ENCODE measurements at regions of chr6 and their contacts with region 1.

Region 1: DNA sequence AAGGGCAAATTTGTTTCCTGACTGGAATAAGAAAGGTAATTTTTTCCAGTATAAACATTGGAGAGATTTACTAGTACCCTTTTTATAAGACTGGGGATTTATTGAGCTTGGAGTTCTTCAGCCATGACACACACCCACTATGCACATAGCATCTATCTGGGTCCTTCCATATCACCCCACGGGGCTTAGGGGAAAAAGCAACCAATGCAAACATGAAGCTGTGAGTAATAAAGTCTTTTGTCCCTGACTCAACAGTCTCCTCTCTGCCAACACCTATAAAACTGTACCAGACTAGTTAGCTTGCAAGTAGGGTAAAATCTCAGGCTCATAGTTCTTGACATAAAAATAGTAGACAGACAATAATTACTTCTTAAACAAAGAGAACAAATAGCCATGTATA is 23.4 kb downstream of the COL21A1 start:
- DNase-seq: no peak
- H3K4me3 ChIP-seq: no peak overlapping the region
- H3K27ac ChIP-seq: no peak overlapping the region
- H3K4me1 ChIP-seq: peaks cover 0 to 8% (median 0%) of the 10 kb centered on the region in 4 donors
- H3K27me3 ChIP-seq: no peaks in the 10 kb centered on the region
- CTCF ChIP-seq: no peak

Region 2: GRCh38 chr6:56241124-56241802 is 17.3 kb after region 1 on chr6:
- intact Hi-C with region 1: loop called (anchors 2 kb)
- DNase-seq: no peak
- H3K4me3 ChIP-seq: peak overlapping the region in 1 of 2 donors; percentile 20
- H3K27ac ChIP-seq: peak overlapping the region; percentile 61 to 64
- H3K4me1 ChIP-seq: peaks cover 0 to 28% (median 2%) of the 10 kb centered on the region in 4 donors
- H3K27me3 ChIP-seq: no peaks in the 10 kb centered on the region
- CTCF ChIP-seq: no peak

Region 3: DNA sequence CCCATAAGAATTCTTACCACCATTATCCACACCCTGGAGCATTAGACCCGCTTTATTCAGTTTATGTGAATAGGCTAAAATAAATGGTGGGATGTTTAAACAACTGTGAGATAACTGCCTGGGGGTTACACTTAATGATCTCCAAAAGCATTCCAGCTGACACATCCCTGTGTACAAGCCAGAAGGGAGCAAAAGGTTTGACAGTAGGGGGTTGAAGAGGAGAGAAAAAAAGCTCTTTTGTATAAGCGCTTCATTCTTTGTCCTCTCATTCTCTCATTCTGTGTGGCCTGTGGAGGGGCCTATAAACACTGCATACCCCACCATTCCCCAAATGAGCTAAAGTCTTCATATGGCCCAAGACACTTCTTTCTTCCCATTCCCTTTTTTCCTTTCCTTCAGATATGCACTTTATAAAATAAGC is 54.2 kb after region 1 on chr6:
- intact Hi-C with region 1: no loop called
- DNase-seq: no peak
- H3K4me3 ChIP-seq: no peak overlapping the region
- H3K27ac ChIP-seq: no peak overlapping the region
- H3K4me1 ChIP-seq: no peaks in the 10 kb centered on the region
- H3K27me3 ChIP-seq: no peaks in the 10 kb centered on the region
- CTCF ChIP-seq: no peak

Measured in tibial artery (tissue), 4 donors.